Naive thymus-derived CD4-positive, alpha-beta T cell (primary cell): ENCODE measurements at regions of chr4 and their contacts with region 1.

Region 1: DNA sequence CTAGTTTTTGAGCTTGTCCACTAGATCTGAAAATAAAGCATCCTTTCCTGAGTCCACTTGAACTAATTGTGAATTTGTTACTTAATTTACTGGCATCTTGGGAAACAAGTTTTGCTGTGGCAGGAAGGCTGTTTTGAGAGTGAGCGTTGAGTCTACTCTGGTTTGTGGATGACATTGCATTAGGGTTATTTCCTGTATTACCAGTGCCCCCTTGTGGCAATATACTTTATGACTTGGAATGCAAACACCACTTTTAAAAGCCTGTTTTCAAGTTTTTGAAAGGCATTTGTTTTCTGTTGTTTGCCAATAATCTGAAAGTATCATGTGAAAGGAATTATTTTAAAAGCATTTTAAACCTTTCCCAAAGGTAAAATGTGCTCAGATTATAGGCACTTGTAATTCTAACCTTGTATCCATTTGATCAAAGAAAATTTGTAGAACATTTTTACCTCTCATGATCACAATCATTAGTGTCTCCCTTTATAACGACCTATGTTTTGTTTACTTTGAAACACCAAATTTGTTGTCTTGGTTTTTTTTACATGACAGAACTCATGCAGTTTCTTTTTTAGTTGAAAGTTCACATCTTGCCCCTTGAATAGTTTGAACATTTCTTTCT is 18.0 kb upstream of the CYP2U1 start:
- DNase-seq: peak in 7 of 9 donors; percentile 36 to 69 (median 63)
- ATAC-seq: peak; percentile 95
- H3K4me3 ChIP-seq: no peak overlapping the region
- H3K4me3 Mint-ChIP-seq: no peak overlapping the region
- H3K27ac ChIP-seq: no peak overlapping the region
- H3K27ac Mint-ChIP-seq: peak overlapping the region in 1 of 9 donors; percentile 38
- H3K4me1 ChIP-seq: no peaks in the 10 kb centered on the region
- H3K4me1 Mint-ChIP-seq: peaks cover 0 to 5% (median 0%) of the 10 kb centered on the region in 7 donors
- H3K27me3 ChIP-seq: no peaks in the 10 kb centered on the region
- H3K27me3 Mint-ChIP-seq: peaks cover 0 to 9% (median 1%) of the 10 kb centered on the region in 5 donors

Region 2: GRCh38 chr4:106369456-106370060 is 1543.8 kb before region 1 on chr4:
- CTCF ChIA-PET with region 1: no interaction called
- POLR2A ChIA-PET with region 1: no interaction called
- intact Hi-C with region 1: loop called in 1 of 2 experiments (anchors 2 kb)
- DNase-seq: peak in 5 of 9 donors; percentile 1 to 28 (median 1)
- ATAC-seq: peak; percentile 60
- H3K4me3 ChIP-seq: no peak overlapping the region
- H3K4me3 Mint-ChIP-seq: no peak overlapping the region
- H3K27ac ChIP-seq: no peak overlapping the region
- H3K27ac Mint-ChIP-seq: no peak overlapping the region
- H3K4me1 ChIP-seq: no peaks in the 10 kb centered on the region
- H3K4me1 Mint-ChIP-seq: peaks cover 0 to 5% (median 0%) of the 10 kb centered on the region in 7 donors
- H3K27me3 ChIP-seq: no peaks in the 10 kb centered on the region
- H3K27me3 Mint-ChIP-seq: peaks cover 19 to 31% (median 24%) of the 10 kb centered on the region in 5 donors

Region 3: GRCh38 chr4:107050525-107051135 is 862.8 kb before region 1 on chr4:
- CTCF ChIA-PET with region 1: no interaction called
- POLR2A ChIA-PET with region 1: no interaction called
- intact Hi-C with region 1: loop called in 1 of 2 experiments (anchors 5 kb)
- DNase-seq: no peak
- ATAC-seq: no peak
- H3K4me3 ChIP-seq: no peak overlapping the region
- H3K4me3 Mint-ChIP-seq: no peak overlapping the region
- H3K27ac ChIP-seq: no peak overlapping the region
- H3K27ac Mint-ChIP-seq: no peak overlapping the region
- H3K4me1 ChIP-seq: no peaks in the 10 kb centered on the region
- H3K4me1 Mint-ChIP-seq: no peaks in the 10 kb centered on the region
- H3K27me3 ChIP-seq: no peaks in the 10 kb centered on the region
- H3K27me3 Mint-ChIP-seq: peaks cover 0 to 3% (median 0%) of the 10 kb centered on the region in 5 donors

Region 4: GRCh38 chr4:107757864-107758476 is 155.4 kb before region 1 on chr4:
- CTCF ChIA-PET with region 1: interaction called, 9 read pairs
- POLR2A ChIA-PET with region 1: no interaction called
- intact Hi-C with region 1: loop called (anchors 1 kb)
- DNase-seq: peak in 5 of 9 donors; percentile 14 to 40 (median 23)
- ATAC-seq: peak; percentile 56
- H3K4me3 ChIP-seq: no peak overlapping the region
- H3K4me3 Mint-ChIP-seq: no peak overlapping the region
- H3K27ac ChIP-seq: no peak overlapping the region
- H3K27ac Mint-ChIP-seq: no peak overlapping the region
- H3K4me1 ChIP-seq: no peaks in the 10 kb centered on the region
- H3K4me1 Mint-ChIP-seq: peaks cover 0 to 5% (median 0%) of the 10 kb centered on the region in 7 donors
- H3K27me3 ChIP-seq: no peaks in the 10 kb centered on the region
- H3K27me3 Mint-ChIP-seq: peaks cover under 1 to 15% (median 10%) of the 10 kb centered on the region in 5 donors